Ovary (tissue), 10 donors: ENCODE measurements at regions of chr21 and their contacts with region 1.

Region 1: DNA sequence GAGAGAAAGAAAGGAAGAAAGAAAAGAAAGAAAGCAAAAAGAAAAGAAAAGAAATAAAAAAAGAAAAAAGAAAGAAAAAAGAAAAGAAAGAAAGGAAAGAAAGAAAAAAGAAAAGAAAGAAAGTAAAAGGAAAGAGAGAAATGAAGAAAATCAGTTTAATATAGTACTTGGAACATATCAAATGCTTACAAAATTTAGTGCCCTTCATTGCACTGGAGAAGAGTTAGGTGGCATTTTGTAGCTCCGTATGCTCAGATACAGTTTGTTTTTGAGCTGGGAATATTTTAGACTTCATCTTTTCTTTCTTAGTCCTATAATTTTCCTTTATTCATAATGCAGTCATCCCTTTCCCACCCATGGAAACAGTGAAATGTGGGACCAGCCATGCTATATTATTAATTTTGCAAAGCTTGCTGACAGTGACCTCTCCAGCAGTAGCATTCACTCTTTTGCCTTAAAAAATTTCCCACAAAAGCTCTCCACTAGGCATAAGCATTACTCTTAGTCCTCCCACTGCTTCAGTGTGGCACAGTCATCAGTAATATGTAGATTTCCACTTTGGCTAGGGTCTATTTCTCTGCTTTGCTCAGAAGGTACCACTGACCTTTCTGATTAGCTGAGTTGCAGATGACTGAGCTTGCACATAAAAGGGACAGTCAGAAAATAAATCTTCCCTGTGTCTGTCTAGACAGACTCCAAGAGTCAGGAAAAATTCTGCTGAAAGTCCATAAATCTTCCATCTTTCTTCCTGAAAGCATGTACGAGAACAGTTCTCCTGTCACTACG is 56.3 kb upstream of the APP start:
- DNase-seq: no peak
- H3K4me3 ChIP-seq: no peak overlapping the region
- H3K27ac ChIP-seq: no peak overlapping the region
- H3K4me1 ChIP-seq: no peaks in the 10 kb centered on the region
- H3K27me3 ChIP-seq: no peaks in the 10 kb centered on the region
- CTCF ChIP-seq: no peak
- EP300 ChIP-seq: no peak
- POLR2A ChIP-seq: no peak

Region 2: GRCh38 chr21:26170471-26171257 is 56.3 kb before region 1 on chr21 and contains the start of gene APP:
- intact Hi-C with region 1: no loop called
- DNase-seq: peak; percentile 81 to 92 (median 90)
- H3K4me3 ChIP-seq: peak within 1 kb of the TSS; percentile 63
- H3K27ac ChIP-seq: peak within 1 kb of the TSS; percentile 56 to 65
- H3K4me1 ChIP-seq: no peaks in the 10 kb centered on the region
- H3K27me3 ChIP-seq: no peaks in the 10 kb centered on the region
- CTCF ChIP-seq: peak; percentile 81 to 99 (median 98)
- EP300 ChIP-seq: no peak
- POLR2A ChIP-seq: peak; percentile 74
- total RNA-seq, gene APP: 211 to 489 (median 345) TPM

Region 3: GRCh38 chr21:26267389-26267788 is 40.5 kb after region 1 on chr21:
- intact Hi-C with region 1: loop called in 1 of 4 experiments (anchors 2 kb)
- DNase-seq: no peak
- H3K4me3 ChIP-seq: no peak overlapping the region
- H3K27ac ChIP-seq: no peak overlapping the region
- H3K4me1 ChIP-seq: no peaks in the 10 kb centered on the region
- H3K27me3 ChIP-seq: no peaks in the 10 kb centered on the region
- CTCF ChIP-seq: no peak
- EP300 ChIP-seq: no peak
- POLR2A ChIP-seq: no peak